Tibial artery (tissue), 4 donors: ENCODE measurements at regions of chr4 and their contacts with region 1.

Region 1: GRCh38 chr4:139295206-139295941 is 5.9 kb upstream of the NAA15 start:
- DNase-seq: peak; percentile 97 to 99
- H3K4me3 ChIP-seq: peak overlapping the region; percentile 70 to 78
- H3K27ac ChIP-seq: peak overlapping the region; percentile 78 to 84
- H3K4me1 ChIP-seq: peaks cover 0 to 32% (median 15%) of the 10 kb centered on the region in 4 donors
- H3K27me3 ChIP-seq: no peaks in the 10 kb centered on the region
- CTCF ChIP-seq: peak; percentile 89 to 92

Region 2: GRCh38 chr4:139177868-139178611 is 117.3 kb before region 1 on chr4:
- intact Hi-C with region 1: loop called (anchors 5 kb)
- DNase-seq: peak; percentile 95 to 98
- H3K4me3 ChIP-seq: peak overlapping the region; percentile 86 to 87
- H3K27ac ChIP-seq: peak overlapping the region; percentile 99 to 100
- H3K4me1 ChIP-seq: peaks cover 0 to 27% (median 7%) of the 10 kb centered on the region in 4 donors
- H3K27me3 ChIP-seq: no peaks in the 10 kb centered on the region
- CTCF ChIP-seq: no peak

Region 3: DNA sequence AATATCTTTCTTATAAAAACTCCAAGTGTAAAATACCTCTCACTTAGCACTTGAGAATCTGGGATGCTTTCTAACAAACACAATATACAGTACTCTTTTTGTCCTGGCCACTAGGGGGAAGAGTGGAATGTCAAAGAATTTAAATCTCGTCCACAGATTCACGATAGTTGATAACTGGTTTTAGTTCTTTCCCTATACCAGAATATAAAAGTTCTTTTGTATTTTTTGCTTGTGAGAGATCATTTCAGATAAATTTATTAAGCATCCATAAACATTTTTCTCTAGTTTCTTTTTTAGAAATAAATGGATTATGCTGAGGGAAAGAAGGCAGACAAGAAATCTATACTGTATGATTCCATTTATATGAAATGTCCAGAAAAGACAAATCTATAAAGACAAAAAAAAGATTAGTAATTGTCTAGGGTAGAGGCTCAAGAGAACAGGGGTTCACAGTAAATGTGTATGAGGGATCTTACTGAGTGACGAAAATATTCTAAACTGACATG is 65.8 kb before region 1 on chr4:
- intact Hi-C with region 1: loop called (anchors 2 kb)
- DNase-seq: no peak
- H3K4me3 ChIP-seq: no peak overlapping the region
- H3K27ac ChIP-seq: no peak overlapping the region
- H3K4me1 ChIP-seq: no peaks in the 10 kb centered on the region
- H3K27me3 ChIP-seq: no peaks in the 10 kb centered on the region
- CTCF ChIP-seq: peak; percentile 67 to 78

Region 4: DNA sequence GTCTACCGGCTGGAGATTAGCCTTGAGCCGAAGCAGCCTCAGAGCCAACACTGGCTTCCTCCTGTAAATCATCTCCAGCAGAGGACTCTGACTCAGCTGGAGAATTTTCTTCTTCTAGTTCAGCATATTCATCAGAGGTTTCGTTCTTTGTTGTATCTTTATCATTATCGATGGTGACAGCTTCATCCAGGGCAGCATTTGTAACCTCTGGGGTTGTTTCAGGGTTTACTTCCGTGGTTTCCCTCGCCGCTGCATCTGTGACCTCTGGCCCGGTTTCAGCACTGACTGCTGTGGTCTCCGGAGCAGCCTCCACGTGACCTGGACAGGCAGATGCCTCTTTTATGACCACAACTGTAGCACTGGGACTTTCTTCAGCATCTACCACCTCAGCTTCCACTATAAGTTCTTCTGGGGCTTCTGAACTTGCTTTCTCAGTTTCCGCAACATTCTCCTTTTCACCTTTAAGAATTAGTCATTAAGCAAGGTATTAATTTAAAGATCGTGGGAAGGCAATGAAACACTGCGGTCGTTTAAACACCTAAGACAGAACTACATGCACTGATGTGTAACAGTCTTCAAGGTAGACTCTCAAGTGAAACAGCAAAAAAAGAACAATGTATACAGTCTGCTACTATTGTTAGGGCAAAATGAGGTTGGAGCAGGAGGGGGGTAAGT is 28.7 kb before region 1 on chr4:
- intact Hi-C with region 1: loop called (anchors 2 kb)
- DNase-seq: peak; percentile 70 to 76
- H3K4me3 ChIP-seq: peak overlapping the region; percentile 35 to 44
- H3K27ac ChIP-seq: peak overlapping the region in 1 of 2 donors; percentile 1
- H3K4me1 ChIP-seq: no peaks in the 10 kb centered on the region
- H3K27me3 ChIP-seq: no peaks in the 10 kb centered on the region
- CTCF ChIP-seq: no peak

Region 5: DNA sequence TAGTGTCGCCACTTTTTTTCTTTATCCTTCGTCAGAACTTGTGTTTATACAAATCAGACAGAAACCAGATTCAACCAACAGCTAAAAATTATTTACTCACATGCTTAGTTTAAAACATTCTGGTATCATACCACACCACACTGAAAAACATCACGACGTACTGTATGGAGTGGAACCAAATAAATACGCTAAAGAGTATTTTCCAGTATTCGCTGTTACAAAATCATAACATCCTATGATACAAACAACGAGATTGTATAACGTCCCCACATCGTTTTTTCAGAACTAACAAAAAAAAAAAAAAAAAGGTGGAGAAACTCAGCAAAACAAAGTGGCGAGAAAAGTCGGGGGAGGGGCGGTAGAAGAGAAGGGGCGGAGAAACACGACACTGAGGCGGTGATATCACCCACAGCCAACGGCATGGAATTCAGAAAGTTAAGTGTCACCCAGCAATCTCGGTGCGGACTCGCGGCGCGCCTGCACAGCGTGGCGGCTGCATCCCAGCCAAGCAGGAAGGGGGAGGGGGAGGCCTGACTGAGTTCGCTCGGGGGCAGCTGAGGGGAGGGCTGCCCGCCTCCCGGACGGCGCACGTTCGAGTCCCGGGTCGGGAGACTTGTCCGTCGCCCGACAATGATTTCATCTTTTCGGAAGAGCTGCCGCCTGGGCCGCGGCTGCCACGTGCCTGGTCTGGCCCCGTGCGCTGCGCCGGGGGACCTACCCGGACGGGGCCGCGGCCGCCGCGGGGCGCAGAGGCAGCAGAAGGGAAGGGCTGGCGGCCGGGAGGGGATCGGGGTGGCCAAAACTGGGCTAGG is 259.7 kb after region 1 on chr4:
- intact Hi-C with region 1: loop called (anchors 10 kb)
- DNase-seq: peak; percentile 93 to 96
- H3K4me3 ChIP-seq: peak overlapping the region; percentile 78 to 98
- H3K27ac ChIP-seq: peak overlapping the region; percentile 96 to 100
- H3K4me1 ChIP-seq: peaks cover 0 to 59% (median 34%) of the 10 kb centered on the region in 4 donors
- H3K27me3 ChIP-seq: no peaks in the 10 kb centered on the region
- CTCF ChIP-seq: peak in 1 of 2 experiments; percentile 5